HCT116 (cell line): ENCODE measurements at regions of chr14 and their contacts with region 1.

Region 1: DNA sequence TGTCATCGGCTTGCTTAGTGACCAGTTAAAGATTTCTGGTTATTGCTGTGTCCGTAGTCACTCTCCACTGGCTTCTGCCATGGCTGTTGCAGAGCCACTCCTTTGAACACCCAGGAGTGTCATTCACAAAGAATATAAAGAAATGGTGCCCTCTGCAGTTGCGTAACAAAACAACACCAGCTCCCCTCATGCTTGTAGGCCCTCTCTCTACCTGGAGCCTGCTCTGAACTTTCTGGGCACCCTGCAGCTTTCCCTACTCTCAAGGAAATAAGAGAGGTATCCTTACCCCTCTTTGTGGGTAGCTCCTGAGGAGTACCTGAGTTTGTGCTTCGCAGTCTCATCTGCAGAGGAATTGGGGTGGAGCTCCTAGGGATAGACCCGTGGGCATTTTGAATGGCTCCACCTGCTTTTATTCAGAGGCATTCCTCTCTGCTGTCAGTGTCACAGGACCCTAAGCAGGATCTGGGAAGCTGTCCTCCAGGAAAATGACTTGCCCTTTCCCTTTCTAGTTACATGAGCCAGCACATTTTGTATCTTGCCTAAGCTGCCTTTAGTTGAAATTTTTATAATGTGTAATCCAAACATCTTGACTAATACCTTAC is 97.2 kb upstream of the TMEM260 start:
- DNase-seq: peak; percentile 28
- ATAC-seq: peak; percentile 90
- H3K4me3 ChIP-seq: no peak overlapping the region
- H3K27ac ChIP-seq: no peak overlapping the region
- H3K4me1 ChIP-seq: no peaks in the 10 kb centered on the region
- H3K27me3 ChIP-seq: no peaks in the 10 kb centered on the region
- CTCF ChIP-seq: peak; percentile 19 to 43 (median 26); a peak in 3 of 6 replicates
- POLR2A ChIP-seq: no peak
- RAD21 ChIP-seq: peak; percentile 60

Region 2: GRCh38 chr14:55438066-55438683 is 1044.2 kb before region 1 on chr14:
- CTCF ChIA-PET with region 1: interaction called, 28 read pairs
- POLR2A ChIA-PET with region 1: no interaction called
- RAD21 ChIA-PET with region 1: no interaction called
- intact Hi-C with region 1: no loop called
- DNase-seq: peak; percentile 57
- ATAC-seq: peak; percentile 94
- H3K4me3 ChIP-seq: no peak overlapping the region
- H3K27ac ChIP-seq: no peak overlapping the region
- H3K4me1 ChIP-seq: peaks cover 0 to 7% of the 10 kb centered on the region in 2 experiments; a peak in 3 of 4 replicates
- H3K27me3 ChIP-seq: no peaks in the 10 kb centered on the region
- CTCF ChIP-seq: peak; percentile 68 to 77 (median 68); a peak in 5 of 6 replicates
- POLR2A ChIP-seq: no peak
- RAD21 ChIP-seq: peak; percentile 87

Region 3: GRCh38 chr14:55707365-55707804 is 775.0 kb before region 1 on chr14:
- CTCF ChIA-PET with region 1: interaction called, 11 read pairs
- POLR2A ChIA-PET with region 1: no interaction called
- RAD21 ChIA-PET with region 1: interaction called in 1 of 2 experiments, 3 read pairs
- intact Hi-C with region 1: no loop called
- DNase-seq: no peak
- ATAC-seq: peak; percentile 67
- H3K4me3 ChIP-seq: no peak overlapping the region
- H3K27ac ChIP-seq: no peak overlapping the region
- H3K4me1 ChIP-seq: no peaks in the 10 kb centered on the region
- H3K27me3 ChIP-seq: no peaks in the 10 kb centered on the region
- CTCF ChIP-seq: peak; percentile 50 to 74 (median 53); a peak in 5 of 6 replicates
- POLR2A ChIP-seq: no peak
- RAD21 ChIP-seq: peak; percentile 83

Region 4: DNA sequence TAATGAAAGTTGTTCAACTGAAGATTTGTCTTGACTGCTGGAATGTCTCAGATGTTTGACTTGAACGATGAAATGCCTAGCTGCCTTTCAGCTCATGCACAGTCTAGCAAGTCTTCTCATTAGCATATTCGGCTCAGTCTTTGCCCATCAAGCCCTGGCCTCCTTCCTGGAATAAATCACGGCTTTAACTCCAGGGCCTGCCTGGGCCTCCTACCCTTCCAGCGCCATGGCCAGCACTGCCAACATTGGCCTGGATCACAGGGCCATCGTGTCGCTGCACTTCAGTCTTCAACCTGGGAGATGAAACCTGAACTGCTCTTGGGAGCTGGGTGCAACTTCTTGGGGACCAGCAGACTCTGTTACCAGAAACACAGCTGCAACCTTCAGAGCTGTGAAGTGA is 29.5 kb before region 1 on chr14:
- CTCF ChIA-PET with region 1: no interaction called
- POLR2A ChIA-PET with region 1: no interaction called
- RAD21 ChIA-PET with region 1: no interaction called
- intact Hi-C with region 1: no loop called
- DNase-seq: no peak
- ATAC-seq: no peak
- H3K4me3 ChIP-seq: no peak overlapping the region
- H3K27ac ChIP-seq: no peak overlapping the region
- H3K4me1 ChIP-seq: no peaks in the 10 kb centered on the region
- H3K27me3 ChIP-seq: no peaks in the 10 kb centered on the region
- CTCF ChIP-seq: no peak
- POLR2A ChIP-seq: no peak
- RAD21 ChIP-seq: no peak

Region 5: DNA sequence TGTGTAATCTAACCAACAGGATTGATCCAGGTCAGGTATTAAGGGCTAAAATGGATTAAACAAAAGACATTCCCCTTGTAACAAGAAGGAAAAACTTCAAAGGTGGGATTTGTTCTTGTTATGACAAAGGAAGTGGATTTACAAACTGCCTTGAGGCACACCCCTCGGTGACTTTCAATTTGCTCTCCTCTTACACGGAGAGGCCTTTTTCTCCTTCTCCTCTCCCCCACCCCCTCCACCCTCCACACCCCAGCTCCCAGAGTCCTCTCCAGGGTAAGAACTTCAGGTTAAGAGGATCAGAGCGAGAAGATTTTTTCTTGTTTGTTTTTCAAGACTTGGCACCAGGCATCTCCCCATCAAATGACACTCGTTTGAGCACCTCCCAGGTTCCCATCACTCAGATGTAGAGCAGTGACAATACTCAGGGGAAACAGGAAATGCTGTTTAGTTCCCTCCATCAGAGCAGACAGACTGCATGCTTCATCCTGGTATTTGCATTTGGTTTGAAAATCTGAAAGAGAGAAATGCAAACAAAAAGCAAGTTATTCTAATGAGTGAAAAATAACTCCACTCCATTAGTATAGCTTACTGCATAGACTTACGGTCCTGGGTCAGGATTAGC is 19.6 kb after region 1 on chr14:
- CTCF ChIA-PET with region 1: no interaction called
- POLR2A ChIA-PET with region 1: no interaction called
- RAD21 ChIA-PET with region 1: no interaction called
- intact Hi-C with region 1: no loop called
- DNase-seq: no peak
- ATAC-seq: no peak
- H3K4me3 ChIP-seq: no peak overlapping the region
- H3K27ac ChIP-seq: no peak overlapping the region
- H3K4me1 ChIP-seq: no peaks in the 10 kb centered on the region
- H3K27me3 ChIP-seq: peaks cover 20% of the 10 kb centered on the region
- CTCF ChIP-seq: no peak
- POLR2A ChIP-seq: no peak
- RAD21 ChIP-seq: no peak

Region 6: GRCh38 chr14:56715938-56716337 is 233.5 kb after region 1 on chr14:
- CTCF ChIA-PET with region 1: no interaction called
- POLR2A ChIA-PET with region 1: no interaction called
- RAD21 ChIA-PET with region 1: no interaction called
- intact Hi-C with region 1: no loop called
- DNase-seq: no peak
- ATAC-seq: peak; percentile 58; the same call in 1 of the 2 replicates
- H3K4me3 ChIP-seq: no peak overlapping the region
- H3K27ac ChIP-seq: no peak overlapping the region
- H3K4me1 ChIP-seq: no peaks in the 10 kb centered on the region
- H3K27me3 ChIP-seq: peaks cover 16% of the 10 kb centered on the region; the same call in 1 of the 2 replicates
- CTCF ChIP-seq: peak in 2 of 3 experiments; percentile 40 to 42; a peak in 4 of 6 replicates
- POLR2A ChIP-seq: no peak
- RAD21 ChIP-seq: peak; percentile 6; the same call in 1 of the 2 replicates